CD8-positive, alpha-beta T cell (primary cell): ENCODE measurements at regions of chr1 and their contacts with region 1.

Region 1: DNA sequence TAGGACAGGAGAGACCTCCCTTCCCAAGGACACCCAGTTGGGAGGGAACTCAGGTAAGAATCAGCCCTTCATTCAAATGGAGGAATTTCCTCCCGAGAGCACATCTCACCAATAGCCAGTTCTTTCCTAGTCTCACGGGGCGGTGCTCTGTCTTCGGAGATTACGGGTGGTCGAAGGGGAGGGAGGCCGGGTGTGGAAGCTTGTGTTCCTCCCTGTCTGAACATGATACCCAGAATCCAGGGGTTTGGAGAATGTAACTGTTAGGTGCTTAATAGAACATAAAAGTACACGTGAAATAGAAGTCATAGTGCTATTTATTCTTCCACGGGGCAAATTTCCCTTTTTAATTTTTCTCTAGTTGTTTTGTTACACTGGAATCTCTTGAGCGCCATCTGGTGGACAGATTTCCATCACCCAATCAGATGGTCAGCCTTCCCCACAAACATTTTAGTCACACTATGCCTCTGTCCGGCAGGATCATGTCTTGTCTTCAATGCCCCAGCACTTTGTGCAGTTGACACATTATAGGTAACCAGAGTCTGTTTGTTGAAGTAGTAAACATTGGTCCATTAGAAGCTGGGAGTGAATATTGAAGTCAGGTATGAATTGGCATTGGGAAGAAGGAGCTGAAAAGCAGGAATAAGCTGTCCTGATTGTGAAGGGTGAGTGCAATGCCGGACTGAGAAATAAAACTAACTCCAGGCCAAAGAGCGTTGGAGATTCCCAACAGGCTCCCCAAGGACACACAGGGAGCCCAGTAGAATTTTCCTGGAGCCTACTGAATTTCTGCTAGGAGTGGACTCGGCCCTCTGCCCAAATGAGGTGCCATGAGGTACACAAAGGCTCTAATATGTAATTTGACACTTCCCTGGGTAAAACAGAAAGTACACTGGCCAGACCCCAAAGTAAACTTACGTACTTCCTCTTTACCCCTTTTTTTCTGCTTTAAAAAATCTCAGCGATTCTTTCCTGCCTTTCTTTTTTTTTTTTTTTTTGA is 27.6 kb upstream of the ZNF697 start:
- DNase-seq: peak; percentile 22 to 73 (median 61)
- ATAC-seq: peak; percentile 38
- H3K4me3 ChIP-seq: peak overlapping the region; percentile 12 to 43
- H3K4me3 Mint-ChIP-seq: peak overlapping the region; percentile 79
- H3K27ac ChIP-seq: no peak overlapping the region
- H3K27ac Mint-ChIP-seq: no peak overlapping the region
- H3K4me1 ChIP-seq: peaks cover 5% of the 10 kb centered on the region
- H3K4me1 Mint-ChIP-seq: peaks cover 7% of the 10 kb centered on the region
- H3K27me3 ChIP-seq: no peaks in the 10 kb centered on the region
- H3K27me3 Mint-ChIP-seq: peaks cover 20% of the 10 kb centered on the region
- CTCF ChIP-seq: peak; percentile 80

Region 2: DNA sequence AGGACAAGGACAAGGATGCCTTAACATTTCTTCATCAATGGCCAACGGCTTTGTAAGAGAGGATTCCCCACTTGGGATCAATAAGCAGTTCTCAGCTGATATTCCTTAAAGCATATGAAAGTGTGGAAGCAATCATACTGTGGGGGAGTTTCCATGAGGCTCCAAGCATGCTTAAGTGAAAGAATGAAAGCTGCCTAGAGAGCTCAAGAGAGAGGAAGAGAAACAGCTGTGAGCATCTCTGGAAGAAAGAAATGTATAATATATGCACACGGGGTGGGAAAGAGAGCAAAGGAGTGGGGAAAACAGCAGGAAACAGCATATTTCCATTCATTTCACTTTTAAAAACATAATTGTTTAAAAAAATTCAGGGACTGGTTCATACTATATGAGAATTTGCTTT is 440.5 kb before region 1 on chr1:
- CTCF ChIA-PET with region 1: no interaction called
- POLR2A ChIA-PET with region 1: no interaction called
- intact Hi-C with region 1: no loop called
- DNase-seq: no peak
- ATAC-seq: no peak
- H3K4me3 ChIP-seq: no peak overlapping the region
- H3K4me3 Mint-ChIP-seq: no peak overlapping the region
- H3K27ac ChIP-seq: no peak overlapping the region
- H3K27ac Mint-ChIP-seq: no peak overlapping the region
- H3K4me1 ChIP-seq: no peaks in the 10 kb centered on the region
- H3K4me1 Mint-ChIP-seq: no peaks in the 10 kb centered on the region
- H3K27me3 ChIP-seq: no peaks in the 10 kb centered on the region
- H3K27me3 Mint-ChIP-seq: no peaks in the 10 kb centered on the region
- CTCF ChIP-seq: no peak

Region 3: DNA sequence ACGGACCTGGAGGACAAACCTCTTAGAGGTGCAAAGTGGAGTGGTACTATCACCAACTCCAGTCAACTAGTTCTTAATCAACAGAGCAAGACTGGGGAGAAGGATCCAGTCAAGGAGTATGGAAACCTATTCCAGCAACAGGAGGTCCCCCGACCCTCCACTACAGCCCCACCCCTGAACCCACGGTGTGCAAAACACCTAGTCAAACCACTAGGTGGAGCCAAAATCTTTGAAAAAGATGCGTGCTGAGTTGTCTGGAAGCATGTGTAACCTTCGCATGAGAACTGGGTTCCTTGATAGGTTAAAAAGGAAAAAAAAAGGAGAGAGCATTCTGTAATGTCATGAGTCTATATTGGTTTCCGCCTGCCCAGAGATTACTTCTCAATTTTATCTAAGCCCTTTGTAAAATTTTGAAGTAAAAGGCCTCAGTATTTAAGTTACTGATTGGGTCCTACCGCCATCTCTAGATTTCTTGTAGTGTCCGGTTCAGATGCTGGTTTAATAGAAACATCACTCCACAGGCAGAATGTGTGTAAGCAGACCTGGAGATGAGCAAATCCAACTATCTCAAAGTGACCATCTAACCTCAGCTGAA is 389.0 kb before region 1 on chr1:
- CTCF ChIA-PET with region 1: interaction called, 3 read pairs
- POLR2A ChIA-PET with region 1: no interaction called
- intact Hi-C with region 1: loop called (anchors 1 to 2 kb)
- DNase-seq: peak in 4 of 9 experiments; percentile 12 to 41 (median 14)
- ATAC-seq: peak; percentile 14
- H3K4me3 ChIP-seq: no peak overlapping the region
- H3K4me3 Mint-ChIP-seq: no peak overlapping the region
- H3K27ac ChIP-seq: no peak overlapping the region
- H3K27ac Mint-ChIP-seq: no peak overlapping the region
- H3K4me1 ChIP-seq: no peaks in the 10 kb centered on the region
- H3K4me1 Mint-ChIP-seq: no peaks in the 10 kb centered on the region
- H3K27me3 ChIP-seq: no peaks in the 10 kb centered on the region
- H3K27me3 Mint-ChIP-seq: peaks cover 8% of the 10 kb centered on the region
- CTCF ChIP-seq: peak; percentile 13

Region 4: DNA sequence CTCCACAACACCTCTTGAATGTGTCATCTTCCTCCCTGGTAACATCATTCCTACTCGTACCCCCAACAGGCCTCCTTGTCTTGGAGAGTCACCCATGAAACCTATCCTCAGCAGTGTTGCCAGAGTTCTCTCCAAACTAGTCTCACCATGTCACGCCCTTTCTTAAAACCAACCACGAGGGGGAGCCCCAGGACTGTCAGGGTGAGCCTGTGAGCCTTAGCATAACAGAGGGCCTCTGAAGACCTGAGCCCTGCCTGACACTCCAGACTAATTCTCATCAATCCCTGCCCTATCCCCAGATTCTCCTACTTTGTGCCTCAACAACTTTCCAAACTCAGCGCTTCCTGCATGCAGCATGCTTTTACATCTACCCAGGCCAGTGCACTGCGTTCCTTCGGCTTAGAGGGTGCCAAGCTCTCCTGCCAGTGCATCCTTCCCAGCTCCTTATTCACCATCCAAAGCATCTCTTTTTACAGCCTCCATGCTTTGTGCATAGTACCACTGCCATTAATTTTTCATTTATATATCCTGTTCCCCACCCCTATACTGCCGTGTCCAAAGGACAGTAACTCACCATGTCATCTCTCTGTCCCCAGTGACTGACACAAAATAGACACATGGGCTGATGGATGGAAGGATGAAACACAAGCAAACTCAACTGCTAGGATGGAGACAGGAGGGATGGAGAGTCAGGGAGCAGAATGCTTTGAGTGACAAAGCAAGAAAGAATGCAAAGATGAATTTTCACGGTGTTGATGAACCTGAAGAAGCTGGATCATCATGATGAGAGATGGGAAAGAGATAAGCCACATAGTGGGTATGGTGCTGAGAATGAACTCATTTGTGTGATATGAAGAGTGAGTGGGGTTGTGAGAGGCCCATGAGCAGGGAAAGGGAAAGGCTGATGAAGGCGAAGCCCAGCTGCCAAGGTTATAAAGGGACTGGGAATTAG is 61.6 kb before region 1 on chr1:
- CTCF ChIA-PET with region 1: interaction called, 13 read pairs
- POLR2A ChIA-PET with region 1: no interaction called
- intact Hi-C with region 1: loop called (anchors 1 kb)
- DNase-seq: peak; percentile 14 to 71 (median 51)
- ATAC-seq: no peak
- H3K4me3 ChIP-seq: no peak overlapping the region
- H3K4me3 Mint-ChIP-seq: no peak overlapping the region
- H3K27ac ChIP-seq: no peak overlapping the region
- H3K27ac Mint-ChIP-seq: no peak overlapping the region
- H3K4me1 ChIP-seq: no peaks in the 10 kb centered on the region
- H3K4me1 Mint-ChIP-seq: no peaks in the 10 kb centered on the region
- H3K27me3 ChIP-seq: no peaks in the 10 kb centered on the region
- H3K27me3 Mint-ChIP-seq: peaks cover 3% of the 10 kb centered on the region
- CTCF ChIP-seq: peak; percentile 48

Region 5: DNA sequence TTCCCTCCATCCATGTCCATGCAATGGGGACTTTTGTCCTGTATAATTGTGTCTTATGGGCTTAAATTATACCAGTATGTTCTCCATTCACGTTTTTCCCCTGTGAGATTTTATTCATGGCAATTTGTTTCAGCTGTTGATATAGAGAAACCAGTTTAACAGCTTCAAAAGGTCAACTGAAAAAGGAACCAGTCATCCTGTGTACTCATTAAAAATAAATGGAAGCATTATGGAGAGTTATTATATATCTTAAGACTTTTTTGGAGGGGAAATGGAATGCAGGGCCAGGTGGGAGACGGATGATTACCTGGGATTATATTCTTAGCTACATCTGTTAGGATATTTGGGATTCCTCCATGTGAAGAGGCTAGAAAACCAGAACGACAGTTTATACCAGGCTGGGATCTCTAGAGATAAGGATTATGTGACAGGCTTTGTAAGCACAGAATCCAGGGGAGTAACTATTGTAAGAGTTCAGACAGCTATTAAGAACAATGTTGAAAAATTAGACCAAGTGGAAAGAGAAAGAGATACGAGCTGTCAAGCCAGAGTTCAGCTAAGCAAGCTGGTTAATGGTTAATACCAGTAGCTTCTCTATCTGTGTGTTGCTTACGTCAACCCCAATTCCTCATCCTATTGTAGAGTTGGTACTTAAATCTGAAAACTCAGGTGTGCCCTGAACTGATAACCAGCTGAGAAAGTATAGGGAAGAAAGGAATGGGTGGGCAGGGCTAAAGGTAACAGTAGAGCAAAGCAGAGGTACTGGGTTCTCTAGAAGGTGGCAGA is 15.2 kb before region 1 on chr1:
- CTCF ChIA-PET with region 1: interaction called, 11 read pairs
- POLR2A ChIA-PET with region 1: interaction called, 3 read pairs
- intact Hi-C with region 1: no loop called
- DNase-seq: no peak
- ATAC-seq: no peak
- H3K4me3 ChIP-seq: no peak overlapping the region
- H3K4me3 Mint-ChIP-seq: no peak overlapping the region
- H3K27ac ChIP-seq: no peak overlapping the region
- H3K27ac Mint-ChIP-seq: no peak overlapping the region
- H3K4me1 ChIP-seq: no peaks in the 10 kb centered on the region
- H3K4me1 Mint-ChIP-seq: no peaks in the 10 kb centered on the region
- H3K27me3 ChIP-seq: peaks cover 0 to 15% of the 10 kb centered on the region in 2 experiments
- H3K27me3 Mint-ChIP-seq: peaks cover 9% of the 10 kb centered on the region
- CTCF ChIP-seq: no peak

Region 6: DNA sequence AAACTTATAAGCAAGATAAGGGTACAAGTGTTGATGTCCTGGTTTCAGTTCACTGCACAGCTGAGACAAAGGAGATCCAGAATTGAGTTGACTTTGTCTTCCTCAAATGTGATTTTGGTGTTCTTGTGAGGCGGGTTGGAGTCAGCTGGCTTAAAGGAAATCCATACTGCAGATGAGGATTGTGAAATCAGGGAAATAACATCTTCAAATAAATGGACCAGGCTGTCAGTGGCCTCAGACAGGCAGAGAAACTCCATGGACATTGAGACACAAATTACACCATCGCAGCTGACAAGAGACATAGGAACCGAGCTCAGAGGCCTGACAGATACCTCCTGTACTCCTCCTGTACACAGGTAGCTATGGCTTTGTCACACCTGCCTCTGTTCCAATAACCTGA is 162.6 kb after region 1 on chr1:
- CTCF ChIA-PET with region 1: no interaction called
- POLR2A ChIA-PET with region 1: no interaction called
- intact Hi-C with region 1: no loop called
- DNase-seq: no peak
- ATAC-seq: no peak
- H3K4me3 ChIP-seq: no peak overlapping the region
- H3K4me3 Mint-ChIP-seq: no peak overlapping the region
- H3K27ac ChIP-seq: no peak overlapping the region
- H3K27ac Mint-ChIP-seq: no peak overlapping the region
- H3K4me1 ChIP-seq: no peaks in the 10 kb centered on the region
- H3K4me1 Mint-ChIP-seq: no peaks in the 10 kb centered on the region
- H3K27me3 ChIP-seq: no peaks in the 10 kb centered on the region
- H3K27me3 Mint-ChIP-seq: peaks cover 10% of the 10 kb centered on the region
- CTCF ChIP-seq: no peak